ENCODE measurements at regions of chr19 and their contacts with region 1.

Region 1: GRCh38 chr19:28324275-28325060 is 888.5 kb downstream of the UQCRFS1 start:
- DNase-seq: no peak
- H3K4me3 ChIP-seq: no peak overlapping the region
- H3K27ac ChIP-seq: no peak overlapping the region
- H3K4me1 ChIP-seq: no peaks in the 10 kb centered on the region
- H3K27me3 ChIP-seq: no peaks in the 10 kb centered on the region
- CTCF ChIP-seq: no peak
- EP300 ChIP-seq: no peak
- POLR2A ChIP-seq: no peak

Region 2: DNA sequence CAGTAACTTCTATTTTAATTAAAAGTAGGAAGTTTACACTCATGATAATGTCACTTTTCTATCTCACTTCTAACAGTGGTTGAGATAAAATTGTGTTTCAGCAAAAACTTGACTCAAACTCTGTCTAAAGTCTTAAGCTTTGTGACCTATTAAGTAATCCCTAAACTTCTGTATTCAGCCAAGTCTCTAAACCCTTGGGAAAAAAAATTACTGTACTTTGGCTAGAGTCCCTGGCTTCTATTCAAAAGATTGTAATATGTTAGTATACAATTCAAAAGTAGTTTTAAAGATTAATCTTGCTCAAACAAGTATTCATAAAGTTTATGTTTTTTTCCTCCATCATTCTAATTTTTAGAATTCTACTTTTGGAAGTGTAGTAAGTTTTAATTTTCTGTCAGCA is 360.3 kb before region 1 on chr19:
- intact Hi-C with region 1: loop called (anchors 2 kb)
- DNase-seq: no peak
- H3K4me3 ChIP-seq: no peak overlapping the region
- H3K27ac ChIP-seq: no peak overlapping the region
- H3K4me1 ChIP-seq: no peaks in the 10 kb centered on the region
- H3K27me3 ChIP-seq: no peaks in the 10 kb centered on the region
- CTCF ChIP-seq: no peak
- EP300 ChIP-seq: no peak
- POLR2A ChIP-seq: no peak

Region 3: DNA sequence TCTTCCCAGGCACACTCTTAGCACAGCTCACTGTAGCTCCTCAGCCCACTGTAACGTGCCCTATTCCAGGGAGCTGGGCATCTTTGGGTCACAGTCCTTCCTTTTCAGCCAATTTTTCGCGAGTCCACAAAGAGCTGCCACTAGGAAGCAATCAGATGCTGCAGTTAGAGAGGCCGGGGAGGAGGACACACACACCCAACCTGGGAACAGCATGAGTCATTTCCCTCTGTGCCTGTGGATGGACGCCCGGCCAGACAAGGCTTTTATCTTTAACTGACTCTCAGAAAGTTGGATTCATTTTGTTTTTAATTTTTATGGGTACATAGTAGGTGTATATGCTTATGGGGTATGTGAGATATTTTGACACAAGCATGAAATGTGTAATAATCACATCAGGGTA is 30.1 kb before region 1 on chr19:
- intact Hi-C with region 1: no loop called
- DNase-seq: no peak
- H3K4me3 ChIP-seq: no peak overlapping the region
- H3K27ac ChIP-seq: no peak overlapping the region
- H3K4me1 ChIP-seq: peaks cover 0 to 6% (median 3%) of the 10 kb centered on the region in 4 donors
- H3K27me3 ChIP-seq: peaks cover 0 to 5% (median 0%) of the 10 kb centered on the region in 3 donors
- CTCF ChIP-seq: no peak
- EP300 ChIP-seq: no peak
- POLR2A ChIP-seq: no peak

Region 4: DNA sequence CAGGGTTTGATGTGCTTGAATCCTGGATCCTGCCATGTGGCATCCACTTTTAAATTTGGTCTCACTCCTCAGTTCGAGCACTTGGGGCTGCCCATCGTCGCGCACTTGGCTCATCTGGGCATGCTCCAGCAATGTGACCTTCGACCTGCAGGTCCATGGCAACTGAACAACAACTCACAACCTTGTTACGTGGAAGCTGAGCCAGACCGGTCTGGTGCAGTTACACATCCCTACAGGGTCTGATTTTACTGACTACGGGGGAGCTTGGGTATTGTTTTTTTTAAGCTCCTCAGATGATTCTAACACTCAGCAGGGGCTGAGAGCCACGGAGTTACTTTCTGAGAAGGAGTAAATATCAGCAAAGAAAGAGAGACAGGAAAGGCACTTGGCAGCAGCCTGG is 118.9 kb after region 1 on chr19:
- intact Hi-C with region 1: no loop called
- DNase-seq: no peak
- H3K4me3 ChIP-seq: no peak overlapping the region
- H3K27ac ChIP-seq: no peak overlapping the region
- H3K4me1 ChIP-seq: no peaks in the 10 kb centered on the region
- H3K27me3 ChIP-seq: no peaks in the 10 kb centered on the region
- CTCF ChIP-seq: no peak
- EP300 ChIP-seq: no peak
- POLR2A ChIP-seq: no peak

Measured in sigmoid colon (tissue), 7 donors.